Right ventricle myocardium inferior (tissue), 1 donor: ENCODE measurements at regions of chr6 and their contacts with region 1.

Region 1: GRCh38 chr6:69138893-69139494 is 503.9 kb downstream of the ADGRB3 start:
- DNase-seq: no peak
- ATAC-seq: peak; percentile 78

Region 2: DNA sequence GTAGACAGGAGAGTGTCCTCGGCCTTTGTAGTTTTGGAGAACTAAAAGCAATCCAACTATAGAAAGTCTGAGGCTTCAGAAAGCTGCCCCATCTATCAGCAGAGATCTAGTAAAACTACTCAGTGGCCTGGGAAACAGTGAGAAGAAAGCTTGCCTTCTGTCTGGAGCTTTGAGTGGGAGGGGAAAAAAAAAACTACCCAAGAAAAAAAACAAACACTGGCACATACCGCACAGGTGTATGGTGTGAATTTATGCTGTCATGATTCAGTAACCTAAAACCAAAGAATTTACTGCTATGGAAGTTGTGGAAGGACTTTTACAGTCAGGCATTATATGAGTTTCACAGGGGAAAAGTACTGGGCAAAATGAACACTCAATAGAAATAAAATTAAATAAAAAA is 223.4 kb before region 1 on chr6:
- intact Hi-C with region 1: no loop called
- DNase-seq: no peak
- ATAC-seq: no peak

Region 3: DNA sequence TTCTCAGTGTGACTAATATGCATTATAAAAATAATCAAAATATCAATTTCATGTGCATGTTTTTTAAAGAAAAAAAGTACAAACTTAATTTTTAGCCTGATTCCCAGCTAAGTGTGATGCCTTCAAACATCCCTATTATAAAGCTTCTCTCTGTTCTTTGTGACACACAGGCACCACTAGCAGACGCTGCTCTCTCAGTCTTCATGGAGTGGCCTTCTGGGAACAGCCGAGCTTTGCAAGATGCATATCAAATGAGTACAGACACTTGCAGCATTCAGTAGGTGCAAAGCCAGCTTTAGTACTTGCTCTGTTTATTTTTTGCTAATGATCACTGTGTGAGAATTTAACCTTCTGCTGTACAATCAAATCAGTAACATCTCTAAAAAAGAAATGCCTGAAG is 163.9 kb before region 1 on chr6:
- intact Hi-C with region 1: loop called (anchors 5 kb)
- DNase-seq: no peak
- ATAC-seq: peak; percentile 67

Region 4: DNA sequence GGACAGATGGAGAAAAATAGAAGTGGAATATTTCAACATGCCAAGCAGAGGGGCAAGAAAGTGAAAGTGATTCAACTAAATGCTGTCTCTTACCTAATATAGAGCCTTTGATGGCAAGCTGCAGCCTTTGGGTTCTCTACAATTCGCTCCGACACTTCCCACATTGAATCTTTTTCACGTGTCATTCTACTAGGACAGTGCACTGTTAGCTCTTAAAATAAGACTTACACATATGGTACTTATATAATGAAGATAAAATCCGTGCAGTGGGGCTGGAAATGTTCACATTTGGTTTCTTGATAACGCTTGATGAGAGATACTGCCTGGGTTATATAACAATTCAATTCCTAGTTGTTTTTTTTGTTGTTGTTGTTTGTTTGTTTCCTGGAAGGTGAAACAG is 155.4 kb after region 1 on chr6:
- intact Hi-C with region 1: loop called (anchors 1 kb)
- DNase-seq: no peak
- ATAC-seq: no peak

Region 5: DNA sequence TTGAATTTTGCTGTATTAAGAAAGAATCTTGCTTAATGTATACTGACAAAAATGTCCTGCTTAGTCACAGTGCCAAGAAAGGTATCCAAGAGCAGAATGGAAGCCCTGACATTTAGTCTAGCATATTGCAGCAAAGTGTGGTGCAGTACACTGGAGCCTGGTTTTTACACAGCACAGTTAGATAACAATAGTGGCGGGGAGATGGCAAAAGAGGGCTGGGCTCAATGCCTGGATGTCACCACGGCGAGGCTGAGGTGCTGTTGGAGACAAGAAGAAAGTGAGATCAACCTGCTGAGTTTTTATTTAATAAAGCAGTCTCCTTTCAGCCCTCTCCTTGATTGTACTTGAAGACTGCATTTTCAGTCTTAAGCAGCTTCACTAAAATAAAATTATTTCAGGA is 231.8 kb after region 1 on chr6:
- intact Hi-C with region 1: loop called (anchors 5 kb)
- DNase-seq: no peak
- ATAC-seq: peak; percentile 82